OCI-LY7 (cell line): ENCODE measurements at regions of chr5 and their contacts with region 1.

Region 1: GRCh38 chr5:32613050-32613672 is 27.8 kb downstream of the SUB1 start:
- DNase-seq: peak; percentile 71
- H3K4me3 ChIP-seq: no peak overlapping the region
- H3K27ac ChIP-seq: no peak overlapping the region
- H3K4me1 ChIP-seq: no peaks in the 10 kb centered on the region
- CTCF ChIP-seq: peak; percentile 99

Region 2: GRCh38 chr5:31825518-31826068 is 787.6 kb before region 1 on chr5:
- CTCF ChIA-PET with region 1: no interaction called
- POLR2A ChIA-PET with region 1: no interaction called
- intact Hi-C with region 1: loop called (anchors 2 kb)
- DNase-seq: peak; percentile 80
- H3K4me3 ChIP-seq: no peak overlapping the region
- H3K27ac ChIP-seq: no peak overlapping the region
- H3K4me1 ChIP-seq: peaks cover 5% of the 10 kb centered on the region
- CTCF ChIP-seq: peak; percentile 94

Region 3: GRCh38 chr5:32092938-32093812 is 520.0 kb before region 1 on chr5:
- CTCF ChIA-PET with region 1: no interaction called
- POLR2A ChIA-PET with region 1: no interaction called
- intact Hi-C with region 1: loop called (anchors 10 kb)
- DNase-seq: peak; percentile 84
- H3K4me3 ChIP-seq: no peak overlapping the region
- H3K27ac ChIP-seq: no peak overlapping the region
- H3K4me1 ChIP-seq: no peaks in the 10 kb centered on the region
- CTCF ChIP-seq: peak; percentile 90

Region 4: GRCh38 chr5:32232441-32233219 is 380.5 kb before region 1 on chr5:
- CTCF ChIA-PET with region 1: no interaction called
- POLR2A ChIA-PET with region 1: no interaction called
- intact Hi-C with region 1: loop called (anchors 2 kb)
- DNase-seq: peak; percentile 78
- H3K4me3 ChIP-seq: no peak overlapping the region
- H3K27ac ChIP-seq: no peak overlapping the region
- H3K4me1 ChIP-seq: no peaks in the 10 kb centered on the region
- CTCF ChIP-seq: peak; percentile 91

Region 5: DNA sequence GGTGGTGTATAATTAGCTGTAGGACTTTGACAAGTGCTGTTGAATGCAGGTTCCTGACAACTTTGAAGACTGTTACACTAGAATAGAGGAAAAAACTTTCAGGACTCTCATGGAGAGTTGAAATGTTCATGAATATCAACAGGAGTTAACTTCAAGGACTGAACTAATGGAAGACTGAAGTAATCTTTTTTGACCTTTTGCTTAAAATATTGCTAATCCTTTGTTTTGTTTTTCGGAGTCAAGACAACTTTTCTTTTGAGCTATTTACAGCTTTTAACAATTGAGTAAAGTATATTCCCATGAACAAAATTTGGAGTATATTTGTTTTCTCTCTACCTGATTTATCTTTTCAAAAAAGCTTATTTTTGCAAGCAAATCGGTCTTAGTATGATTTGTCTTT is 266.3 kb before region 1 on chr5:
- CTCF ChIA-PET with region 1: no interaction called
- POLR2A ChIA-PET with region 1: no interaction called
- intact Hi-C with region 1: loop called (anchors 5 kb)
- DNase-seq: peak; percentile 22
- H3K4me3 ChIP-seq: no peak overlapping the region
- H3K27ac ChIP-seq: no peak overlapping the region
- H3K4me1 ChIP-seq: no peaks in the 10 kb centered on the region
- CTCF ChIP-seq: no peak

Region 6: GRCh38 chr5:32489791-32490582 is 123.2 kb before region 1 on chr5:
- CTCF ChIA-PET with region 1: no interaction called
- POLR2A ChIA-PET with region 1: no interaction called
- intact Hi-C with region 1: loop called (anchors 1 kb)
- DNase-seq: peak; percentile 77
- H3K4me3 ChIP-seq: no peak overlapping the region
- H3K27ac ChIP-seq: no peak overlapping the region
- H3K4me1 ChIP-seq: no peaks in the 10 kb centered on the region
- CTCF ChIP-seq: peak; percentile 90